ENCODE measurements at regions of chr6 and their contacts with region 1.

Region 1: GRCh38 chr6:40308533-40309306 is 278.4 kb downstream of the LRFN2 start:
- DNase-seq: peak; percentile 8
- H3K4me3 ChIP-seq: no peak overlapping the region
- H3K27ac ChIP-seq: no peak overlapping the region
- H3K27me3 ChIP-seq: no peaks in the 10 kb centered on the region
- CTCF ChIP-seq: peak; percentile 83

Region 2: GRCh38 chr6:39980839-39981580 is 327.7 kb before region 1 on chr6:
- CTCF ChIA-PET with region 1: interaction called, 11 read pairs
- POLR2A ChIA-PET with region 1: no interaction called
- DNase-seq: no peak
- H3K4me3 ChIP-seq: no peak overlapping the region
- H3K27ac ChIP-seq: no peak overlapping the region
- H3K27me3 ChIP-seq: peaks cover 3% of the 10 kb centered on the region
- CTCF ChIP-seq: peak; percentile 60

Region 3: DNA sequence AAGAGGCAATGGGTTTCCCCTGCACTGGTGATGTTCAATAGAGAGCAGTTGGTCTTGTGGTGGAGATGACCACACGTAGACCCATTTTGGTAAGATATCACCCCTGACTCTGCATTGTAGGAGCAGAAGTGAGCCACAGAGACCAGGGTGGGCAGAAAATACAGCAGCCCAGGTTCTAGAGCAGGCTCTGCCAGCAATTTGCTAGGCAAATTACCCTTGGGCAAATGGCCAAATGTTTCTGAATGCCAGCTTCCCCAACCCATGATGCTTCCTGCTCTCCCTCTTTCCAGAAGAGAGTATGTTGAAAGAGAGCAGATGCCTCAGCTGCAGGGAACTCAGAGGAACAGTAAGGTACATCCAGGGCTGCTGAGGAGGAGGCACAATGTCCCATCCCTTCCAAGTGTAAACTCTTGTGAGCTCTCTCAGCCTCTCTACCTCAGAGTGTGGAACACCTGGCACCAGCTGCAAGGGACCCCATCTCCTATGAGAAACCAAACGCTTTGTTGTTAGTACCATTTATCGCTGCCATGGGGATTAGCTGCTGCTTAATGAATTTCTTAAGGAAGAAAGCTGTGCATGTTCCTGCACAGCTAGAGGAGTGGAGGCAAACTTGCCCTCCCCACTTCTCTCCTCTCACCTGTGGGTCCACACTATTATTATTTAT is 57.0 kb before region 1 on chr6:
- CTCF ChIA-PET with region 1: no interaction called
- POLR2A ChIA-PET with region 1: no interaction called
- DNase-seq: no peak
- H3K4me3 ChIP-seq: no peak overlapping the region
- H3K27ac ChIP-seq: no peak overlapping the region
- H3K27me3 ChIP-seq: no peaks in the 10 kb centered on the region
- CTCF ChIP-seq: no peak

Region 4: GRCh38 chr6:40325041-40325440 is 16.3 kb after region 1 on chr6:
- CTCF ChIA-PET with region 1: no interaction called
- POLR2A ChIA-PET with region 1: no interaction called
- DNase-seq: no peak
- H3K4me3 ChIP-seq: no peak overlapping the region
- H3K27ac ChIP-seq: no peak overlapping the region
- H3K27me3 ChIP-seq: no peaks in the 10 kb centered on the region
- CTCF ChIP-seq: no peak

Region 5: GRCh38 chr6:40536442-40536841 is 227.7 kb after region 1 on chr6:
- CTCF ChIA-PET with region 1: no interaction called
- POLR2A ChIA-PET with region 1: no interaction called
- DNase-seq: no peak
- H3K4me3 ChIP-seq: no peak overlapping the region
- H3K27ac ChIP-seq: no peak overlapping the region
- H3K27me3 ChIP-seq: no peaks in the 10 kb centered on the region
- CTCF ChIP-seq: 0 out of 2 replicates have a peak, but pooled peaks have one; percentile 14

Measured in AG04450 (cell line).